ENCODE measurements at regions of chr1 and their contacts with region 1.

Region 1: DNA sequence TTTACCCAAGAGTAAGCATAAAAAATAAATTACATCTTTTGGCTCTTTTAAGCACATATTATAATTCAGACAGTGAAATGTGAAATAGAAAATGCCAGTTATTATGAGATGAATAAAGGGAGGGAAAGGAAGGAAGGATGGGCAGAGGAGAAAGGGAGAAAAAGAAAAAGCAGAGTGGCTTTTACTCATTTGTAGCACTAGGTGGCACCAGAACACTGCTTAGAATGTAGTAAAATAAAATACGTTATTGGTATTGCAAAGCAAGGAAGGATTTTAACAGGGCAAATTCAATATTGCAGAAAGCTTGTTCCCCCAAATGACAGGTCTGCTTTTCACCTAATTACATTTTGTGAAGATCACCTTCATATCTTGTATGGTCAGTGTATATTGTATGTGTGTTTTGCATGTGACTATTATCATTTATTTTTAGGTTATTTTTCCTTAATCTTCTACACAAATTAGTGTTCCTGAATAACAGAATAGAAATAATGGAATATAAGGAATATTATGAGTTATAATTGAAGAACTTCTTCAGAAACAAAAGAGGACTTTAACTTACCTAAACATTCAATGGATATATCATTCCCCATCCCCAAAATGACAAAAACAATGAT is 9.1 kb upstream of the PCNX2 start:
- DNase-seq: no peak
- H3K4me3 Mint-ChIP-seq: no peak overlapping the region
- H3K27ac Mint-ChIP-seq: no peak overlapping the region
- H3K4me1 Mint-ChIP-seq: no peaks in the 10 kb centered on the region
- H3K27me3 Mint-ChIP-seq: peaks cover 4% of the 10 kb centered on the region

Region 2: GRCh38 chr1:233364695-233365539 is 60.3 kb after region 1 on chr1:
- CTCF ChIA-PET with region 1: interaction called, 12 read pairs
- intact Hi-C with region 1: loop called (anchors 5 kb)
- DNase-seq: no peak
- H3K4me3 Mint-ChIP-seq: no peak overlapping the region
- H3K27ac Mint-ChIP-seq: no peak overlapping the region
- H3K4me1 Mint-ChIP-seq: no peaks in the 10 kb centered on the region
- H3K27me3 Mint-ChIP-seq: peaks cover 5% of the 10 kb centered on the region

Region 3: DNA sequence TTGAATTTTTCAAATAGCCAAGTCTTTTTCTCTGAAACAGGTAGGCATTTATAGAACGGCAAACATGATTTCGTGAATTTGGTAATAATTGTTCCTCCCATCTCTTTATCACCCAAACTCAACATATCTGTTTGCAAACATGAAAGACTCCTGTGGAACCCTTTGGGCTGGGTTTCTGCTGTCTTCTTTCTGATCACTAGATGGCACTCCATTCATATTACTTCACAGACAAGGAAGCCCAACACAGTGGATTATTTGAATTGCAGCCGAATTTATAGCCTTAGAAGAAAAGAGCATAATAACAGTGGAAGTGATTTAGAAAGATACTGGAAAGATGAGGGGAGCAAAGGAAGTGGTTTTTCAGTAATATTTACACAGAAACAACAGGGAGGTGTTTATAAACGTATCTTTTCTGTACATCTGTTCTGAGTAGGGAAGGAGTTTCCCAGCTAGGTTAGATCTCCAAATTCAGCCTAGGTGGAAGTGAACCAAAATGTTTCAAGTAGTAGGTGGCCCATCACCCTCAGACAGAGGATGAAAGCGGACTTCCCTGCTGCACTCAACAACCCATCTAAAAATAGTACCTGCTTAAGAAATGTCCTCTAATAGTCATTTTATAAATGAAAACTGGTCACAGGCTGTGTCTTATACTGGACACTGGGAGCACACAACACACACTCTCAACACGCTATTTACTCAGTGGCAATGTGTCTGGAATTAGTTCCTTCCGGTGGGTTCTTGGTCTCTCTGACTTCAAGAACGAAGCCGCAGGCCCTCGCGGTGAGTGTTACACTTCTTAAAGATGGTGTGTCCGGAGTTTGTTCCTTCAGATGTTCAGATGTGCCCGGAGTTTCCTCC is 90.5 kb after region 1 on chr1:
- CTCF ChIA-PET with region 1: interaction called, 4 read pairs
- intact Hi-C with region 1: loop called (anchors 5 kb)
- DNase-seq: peak; percentile 35
- H3K4me3 Mint-ChIP-seq: no peak overlapping the region
- H3K27ac Mint-ChIP-seq: no peak overlapping the region
- H3K4me1 Mint-ChIP-seq: no peaks in the 10 kb centered on the region
- H3K27me3 Mint-ChIP-seq: peaks cover 36% of the 10 kb centered on the region

Region 4: GRCh38 chr1:233440951-233441401 is 136.4 kb after region 1 on chr1:
- CTCF ChIA-PET with region 1: interaction called, 3 read pairs
- intact Hi-C with region 1: loop called (anchors 1 kb)
- DNase-seq: peak; percentile 8
- H3K4me3 Mint-ChIP-seq: no peak overlapping the region
- H3K27ac Mint-ChIP-seq: no peak overlapping the region
- H3K4me1 Mint-ChIP-seq: no peaks in the 10 kb centered on the region
- H3K27me3 Mint-ChIP-seq: peaks cover 17% of the 10 kb centered on the region